ENCODE measurements at regions of chr22 and their contacts with region 1.

Region 1: DNA sequence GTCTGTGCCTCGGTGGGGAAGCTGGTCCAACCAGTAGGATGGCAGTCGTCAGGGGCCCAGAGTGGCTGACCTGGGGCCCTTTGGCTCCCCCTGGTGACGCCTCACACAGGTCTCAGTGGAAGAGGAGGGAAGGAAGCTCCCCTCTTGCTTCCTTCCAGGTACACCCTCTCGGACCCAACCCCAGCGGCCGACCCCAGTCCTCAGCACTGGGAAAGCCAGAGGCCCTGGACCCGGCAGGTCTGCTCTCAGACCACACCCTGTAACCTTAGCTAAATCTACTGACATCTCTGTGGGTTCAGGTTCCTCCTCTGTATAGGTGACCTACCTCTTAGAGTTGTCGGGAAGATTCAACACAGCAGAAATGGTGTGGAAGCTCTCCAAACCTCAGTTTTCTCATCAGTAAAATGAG is 3.4 kb upstream of the SCUBE1 start:
- DNase-seq: peak; percentile 44 to 78 (median 69)
- H3K4me3 ChIP-seq: no peak overlapping the region
- H3K27ac ChIP-seq: no peak overlapping the region
- H3K4me1 ChIP-seq: no peaks in the 10 kb centered on the region
- H3K27me3 ChIP-seq: no peaks in the 10 kb centered on the region
- CTCF ChIP-seq: peak in 2 of 3 donors; percentile 40 to 42
- EP300 ChIP-seq: no peak
- POLR2A ChIP-seq: no peak

Region 2: DNA sequence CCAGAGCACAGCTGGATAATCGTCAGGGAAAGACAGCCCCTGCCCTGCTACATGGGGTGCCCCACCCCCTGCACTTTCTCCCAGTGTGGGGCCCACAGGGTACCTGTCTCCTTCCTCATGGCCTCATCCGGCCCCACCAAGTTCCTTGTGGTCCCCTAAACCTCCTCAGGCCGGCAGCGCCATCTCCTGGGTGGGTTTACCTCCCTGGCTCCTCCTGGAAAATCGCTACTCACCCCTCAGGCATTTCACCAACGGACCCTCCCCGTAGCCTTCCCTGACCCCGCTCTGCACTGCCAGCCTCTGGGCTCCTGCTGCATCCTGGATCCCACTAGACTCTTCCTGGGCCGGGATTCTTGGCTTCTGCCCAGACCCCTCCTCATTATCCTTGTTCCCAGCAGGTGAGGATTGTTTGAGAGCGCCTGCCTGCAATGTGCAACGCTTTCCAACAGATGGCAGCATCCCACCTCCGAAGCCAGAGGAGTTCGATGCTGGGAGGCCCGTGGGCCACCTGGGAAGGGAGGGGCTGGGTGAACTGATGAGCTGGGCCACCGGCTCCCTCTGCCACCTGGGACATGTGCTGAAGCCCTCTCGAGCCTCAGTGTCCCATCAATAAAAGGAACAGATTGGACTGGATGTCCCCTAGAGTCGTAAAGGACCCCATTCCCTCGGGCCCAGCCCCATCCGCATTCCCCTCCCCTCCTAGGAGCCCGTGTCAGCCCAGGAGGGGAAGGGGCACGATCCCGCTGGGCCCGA is 115.4 kb before region 1 on chr22:
- intact Hi-C with region 1: loop called in 2 of 4 experiments (anchors 5 to 10 kb)
- DNase-seq: peak; percentile 65 to 83 (median 80)
- H3K4me3 ChIP-seq: no peak overlapping the region
- H3K27ac ChIP-seq: no peak overlapping the region
- H3K4me1 ChIP-seq: peaks cover 6% of the 10 kb centered on the region
- H3K27me3 ChIP-seq: no peaks in the 10 kb centered on the region
- CTCF ChIP-seq: peak; percentile 80 to 94 (median 90)
- EP300 ChIP-seq: no peak
- POLR2A ChIP-seq: no peak

Region 3: GRCh38 chr22:43273902-43274484 is 72.5 kb before region 1 on chr22:
- intact Hi-C with region 1: loop called in 1 of 4 experiments (anchors 5 kb)
- DNase-seq: peak in 2 of 5 donors; percentile 55 to 62
- H3K4me3 ChIP-seq: no peak overlapping the region
- H3K27ac ChIP-seq: peak overlapping the region in 1 of 2 donors; percentile 74
- H3K4me1 ChIP-seq: peaks cover 19% of the 10 kb centered on the region
- H3K27me3 ChIP-seq: no peaks in the 10 kb centered on the region
- CTCF ChIP-seq: peak; percentile 23 to 71 (median 68)
- EP300 ChIP-seq: no peak
- POLR2A ChIP-seq: no peak

Region 4: DNA sequence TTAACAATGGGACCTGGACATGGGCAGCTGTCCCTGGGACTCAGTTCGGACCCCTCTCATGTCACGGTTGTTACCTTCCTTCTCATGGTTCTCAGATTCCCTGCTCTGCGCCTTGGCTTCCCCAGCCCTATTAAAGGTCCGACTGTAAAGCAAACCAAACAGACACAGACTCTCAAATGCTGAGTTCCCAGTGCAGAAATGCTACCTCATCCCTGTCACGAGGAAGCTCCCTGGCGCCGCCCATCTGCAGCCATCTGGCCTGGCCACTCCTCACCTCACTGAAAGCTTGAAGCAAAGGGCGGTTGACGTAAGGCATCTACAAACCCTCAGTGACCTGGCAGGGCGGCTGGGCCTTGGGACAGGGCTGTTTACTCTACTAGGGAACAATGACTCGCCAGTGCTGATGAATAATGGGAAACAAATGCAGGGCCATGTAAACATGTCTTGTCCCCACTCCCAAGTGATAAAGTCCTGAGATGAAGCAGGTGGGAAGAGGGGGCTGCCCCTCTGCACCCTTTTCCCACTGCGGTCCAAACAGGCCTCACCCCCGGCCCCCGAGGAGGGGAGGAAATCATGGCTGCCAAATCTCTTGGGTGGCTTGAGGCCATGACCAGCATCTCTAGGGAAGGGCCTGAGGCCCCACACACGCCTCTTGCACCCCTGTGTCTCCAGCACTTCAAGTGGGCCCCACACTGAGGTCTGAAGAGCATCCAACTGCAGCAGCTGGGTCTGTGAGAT is 52.7 kb before region 1 on chr22:
- intact Hi-C with region 1: loop called in 1 of 4 experiments (anchors 10 kb)
- DNase-seq: peak; percentile 71 to 84 (median 81)
- H3K4me3 ChIP-seq: no peak overlapping the region
- H3K27ac ChIP-seq: peak overlapping the region; percentile 11 to 59
- H3K4me1 ChIP-seq: peaks cover 53% of the 10 kb centered on the region
- H3K27me3 ChIP-seq: no peaks in the 10 kb centered on the region
- CTCF ChIP-seq: no peak
- EP300 ChIP-seq: no peak
- POLR2A ChIP-seq: no peak

Region 5: DNA sequence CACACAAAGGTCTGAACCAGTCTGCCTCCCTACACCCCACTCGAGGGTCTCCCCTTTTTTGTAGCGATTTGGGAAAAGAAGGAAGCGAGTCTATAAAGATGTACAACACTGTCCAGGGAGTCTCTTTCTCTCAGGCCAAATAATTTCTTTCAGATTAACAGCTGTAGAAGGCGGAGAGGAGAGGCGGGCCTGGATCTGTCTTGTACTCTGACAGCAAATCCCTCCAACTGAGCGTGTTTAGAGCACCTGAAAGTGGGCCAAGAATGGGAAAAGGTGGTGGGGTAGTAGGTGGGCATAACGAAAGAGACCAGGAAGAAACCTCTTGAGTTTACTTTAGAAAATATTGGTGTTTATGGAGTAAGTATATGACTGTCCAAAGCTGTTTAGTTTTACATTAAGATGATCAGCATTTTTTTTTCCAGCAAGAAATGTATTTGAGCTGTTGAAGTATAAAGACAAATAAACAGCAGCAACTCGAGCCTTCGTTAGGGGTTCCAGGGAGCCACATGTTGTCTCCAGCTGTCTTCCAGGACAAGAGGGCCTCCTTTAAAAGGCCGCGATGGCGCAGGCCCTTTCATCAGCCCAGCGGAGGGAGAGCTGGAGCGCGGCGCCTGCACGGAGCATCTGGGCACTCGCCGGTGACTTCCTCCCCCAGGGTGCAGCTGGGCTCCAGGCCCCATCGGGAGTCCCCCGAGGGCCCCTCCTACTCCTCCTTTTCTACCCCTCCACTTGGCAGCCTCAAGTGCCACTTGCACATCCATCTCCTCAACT is 38.3 kb before region 1 on chr22:
- intact Hi-C with region 1: loop called in 1 of 4 experiments (anchors 5 kb)
- DNase-seq: peak in 1 of 5 donors; percentile 48
- H3K4me3 ChIP-seq: no peak overlapping the region
- H3K27ac ChIP-seq: no peak overlapping the region
- H3K4me1 ChIP-seq: peaks cover 23% of the 10 kb centered on the region
- H3K27me3 ChIP-seq: no peaks in the 10 kb centered on the region
- CTCF ChIP-seq: no peak
- EP300 ChIP-seq: no peak
- POLR2A ChIP-seq: no peak

Region 6: GRCh38 chr22:43319661-43320486 is 26.7 kb before region 1 on chr22:
- intact Hi-C with region 1: no loop called
- DNase-seq: no peak
- H3K4me3 ChIP-seq: no peak overlapping the region
- H3K27ac ChIP-seq: no peak overlapping the region
- H3K4me1 ChIP-seq: peaks cover 2% of the 10 kb centered on the region
- H3K27me3 ChIP-seq: no peaks in the 10 kb centered on the region
- CTCF ChIP-seq: no peak
- EP300 ChIP-seq: no peak
- POLR2A ChIP-seq: no peak